Left colon (tissue), 2 donors: ENCODE measurements at regions of chr15 and their contacts with region 1.

Region 1: DNA sequence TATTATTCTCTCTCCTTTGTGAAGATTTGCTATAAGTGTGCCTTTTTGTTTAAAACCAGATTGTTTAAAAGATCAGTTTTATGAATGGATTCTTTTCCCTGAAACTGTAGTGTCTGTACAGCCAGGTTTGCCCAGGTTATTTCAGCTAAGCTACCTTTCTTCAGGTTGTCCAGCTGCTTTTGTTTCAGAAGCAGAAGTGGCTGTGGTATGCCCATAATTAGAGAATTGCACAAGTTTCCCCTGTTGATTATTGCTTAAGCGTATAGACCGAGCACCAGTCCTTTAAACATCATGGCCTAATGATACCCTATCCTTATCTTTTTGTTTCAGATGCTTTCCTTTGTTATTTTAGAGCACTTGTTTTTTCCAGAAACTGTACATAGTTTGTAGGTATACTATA is 10.2 kb downstream of the ASB7 start:
- DNase-seq: no peak
- ATAC-seq: no peak

Region 2: DNA sequence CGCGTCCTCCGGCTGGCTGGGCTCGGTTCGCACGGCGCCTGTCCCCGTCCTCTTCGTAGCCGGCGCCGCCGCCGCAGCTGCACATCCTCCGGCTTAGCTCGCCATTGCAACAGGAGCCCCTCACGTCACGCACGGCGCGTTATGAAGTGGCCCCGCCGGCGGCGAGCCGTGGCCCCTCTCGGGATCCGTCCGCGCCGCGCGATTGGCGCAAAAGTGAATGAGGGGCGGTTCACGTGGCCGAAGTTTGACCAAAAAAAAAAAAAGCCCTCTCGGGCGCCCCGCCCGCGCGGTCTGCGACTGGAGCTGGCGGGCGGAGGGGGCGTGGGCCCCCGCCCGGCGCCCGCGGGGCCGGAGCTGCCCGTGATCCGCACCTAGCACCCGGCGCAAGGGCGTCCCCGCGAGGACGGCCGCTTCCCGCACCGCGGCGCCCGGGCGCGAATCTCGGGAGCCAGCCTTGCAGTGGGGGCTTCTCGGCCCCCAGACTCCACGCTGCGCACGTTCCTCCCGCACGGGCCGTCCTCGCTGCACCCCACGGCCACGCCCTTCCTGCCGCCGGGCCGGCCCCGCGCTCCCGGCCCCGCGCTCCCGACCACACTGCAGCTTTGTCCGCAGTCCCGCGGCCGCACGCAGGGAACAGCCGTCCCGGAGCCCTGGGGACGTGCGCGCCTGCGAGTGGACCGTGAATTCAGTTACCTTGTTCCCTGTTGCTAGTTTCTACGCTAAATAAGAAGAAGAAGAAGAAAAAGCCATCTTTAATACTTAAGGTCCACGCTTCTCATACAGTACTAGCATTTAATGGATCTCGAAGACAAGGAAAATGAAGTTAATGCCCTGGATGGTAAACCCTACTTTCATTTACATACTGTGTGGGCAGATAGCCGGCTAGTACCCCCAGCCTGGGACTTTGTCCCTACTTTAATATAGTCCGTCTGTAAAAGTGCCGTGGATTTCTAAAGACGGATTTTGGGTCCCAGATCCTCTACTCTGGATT is 639.6 kb after region 1 on chr15 and contains the start of gene CHSY1:
- intact Hi-C with region 1: loop called in 1 of 2 experiments (anchors 10 kb)
- DNase-seq: peak; percentile 90 to 93
- ATAC-seq: peak; percentile 83
- total RNA-seq, gene CHSY1: 10.6 to 11.7 TPM